PC-3 (cell line): ENCODE measurements at regions of chr2 and their contacts with region 1.

Region 1: DNA sequence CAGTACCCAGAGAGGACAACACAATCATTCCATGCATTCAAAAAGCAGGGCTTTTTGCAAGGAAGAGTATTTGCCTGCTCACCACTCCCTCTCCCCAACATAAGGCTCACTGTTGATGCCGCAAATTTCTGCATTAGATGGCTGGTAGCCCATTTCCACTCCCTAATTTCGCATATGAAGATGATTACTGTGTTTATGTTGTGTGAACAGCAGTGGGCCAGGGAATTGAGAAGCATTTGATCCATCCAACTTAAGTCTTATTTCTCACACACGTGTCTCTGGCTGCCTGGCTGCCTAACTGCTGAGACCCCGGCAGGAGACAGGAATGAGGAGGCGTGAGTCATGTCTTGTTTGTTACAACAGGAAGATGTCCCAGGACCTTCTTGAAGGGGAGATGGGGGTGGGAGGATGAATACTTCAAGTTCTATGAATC is 294.1 kb downstream of the ALK start:
- DNase-seq: peak; percentile 80
- ATAC-seq: peak; percentile 54
- H3K4me3 ChIP-seq: peak overlapping the region; percentile 59
- H3K27ac ChIP-seq: peak overlapping the region; percentile 99
- H3K4me1 ChIP-seq: peaks cover 54% of the 10 kb centered on the region
- H3K27me3 ChIP-seq: no peaks in the 10 kb centered on the region
- CTCF ChIP-seq: no peak

Region 2: GRCh38 chr2:29420999-29421782 is 206.1 kb before region 1 on chr2:
- CTCF ChIA-PET with region 1: no interaction called
- POLR2A ChIA-PET with region 1: no interaction called
- intact Hi-C with region 1: loop called (anchors 5 kb)
- DNase-seq: no peak
- ATAC-seq: no peak
- H3K4me3 ChIP-seq: no peak overlapping the region
- H3K27ac ChIP-seq: no peak overlapping the region
- H3K4me1 ChIP-seq: no peaks in the 10 kb centered on the region
- H3K27me3 ChIP-seq: no peaks in the 10 kb centered on the region
- CTCF ChIP-seq: no peak

Region 3: DNA sequence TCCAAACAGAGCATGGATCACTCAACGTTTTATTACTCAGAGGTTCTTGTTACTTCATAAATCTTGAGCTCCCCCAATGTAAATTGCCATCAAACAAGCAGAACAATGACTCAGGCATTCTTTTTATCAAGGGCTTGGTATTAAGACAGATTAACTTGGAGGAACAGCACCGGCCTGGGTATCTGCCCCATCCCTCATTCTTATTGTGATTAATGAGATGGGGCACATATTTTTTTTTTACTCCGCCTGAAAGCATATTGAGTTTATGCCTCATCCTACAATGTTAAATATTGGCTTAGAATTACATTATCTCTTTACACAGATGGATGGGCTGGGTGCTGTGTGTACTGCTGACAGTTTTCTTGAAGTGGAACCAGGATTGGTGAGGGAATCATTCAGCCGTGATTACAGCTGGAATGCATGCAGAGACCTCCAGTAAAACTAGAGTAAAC is 124.8 kb before region 1 on chr2:
- CTCF ChIA-PET with region 1: no interaction called
- POLR2A ChIA-PET with region 1: no interaction called
- intact Hi-C with region 1: loop called (anchors 5 kb)
- DNase-seq: peak; percentile 89
- ATAC-seq: peak; percentile 90
- H3K4me3 ChIP-seq: no peak overlapping the region
- H3K27ac ChIP-seq: peak overlapping the region; percentile 25
- H3K4me1 ChIP-seq: peaks cover 32% of the 10 kb centered on the region
- H3K27me3 ChIP-seq: no peaks in the 10 kb centered on the region
- CTCF ChIP-seq: no peak

Region 4: GRCh38 chr2:29583088-29583487 is 44.2 kb before region 1 on chr2:
- CTCF ChIA-PET with region 1: no interaction called
- POLR2A ChIA-PET with region 1: no interaction called
- intact Hi-C with region 1: loop called (anchors 1 kb)
- DNase-seq: peak; percentile 91
- ATAC-seq: peak; percentile 86
- H3K4me3 ChIP-seq: no peak overlapping the region
- H3K27ac ChIP-seq: peak overlapping the region; percentile 83
- H3K4me1 ChIP-seq: peaks cover 38% of the 10 kb centered on the region
- H3K27me3 ChIP-seq: no peaks in the 10 kb centered on the region
- CTCF ChIP-seq: no peak

Region 5: GRCh38 chr2:29650631-29651097 is 23.4 kb after region 1 on chr2:
- CTCF ChIA-PET with region 1: no interaction called
- POLR2A ChIA-PET with region 1: no interaction called
- intact Hi-C with region 1: no loop called
- DNase-seq: peak; percentile 80
- ATAC-seq: no peak
- H3K4me3 ChIP-seq: no peak overlapping the region
- H3K27ac ChIP-seq: peak overlapping the region; percentile 52
- H3K4me1 ChIP-seq: peaks cover 19% of the 10 kb centered on the region
- H3K27me3 ChIP-seq: no peaks in the 10 kb centered on the region
- CTCF ChIP-seq: no peak

Region 6: GRCh38 chr2:29663268-29663667 is 36.0 kb after region 1 on chr2:
- CTCF ChIA-PET with region 1: no interaction called
- POLR2A ChIA-PET with region 1: no interaction called
- intact Hi-C with region 1: loop called (anchors 2 kb)
- DNase-seq: peak; percentile 83
- ATAC-seq: peak; percentile 75
- H3K4me3 ChIP-seq: peak overlapping the region; percentile 31
- H3K27ac ChIP-seq: peak overlapping the region; percentile 96
- H3K4me1 ChIP-seq: peaks cover 42% of the 10 kb centered on the region
- H3K27me3 ChIP-seq: no peaks in the 10 kb centered on the region
- CTCF ChIP-seq: no peak